ENCODE measurements at regions of chr15 and their contacts with region 1.

Region 1: GRCh38 chr15:46786590-46787285 is 930.6 kb upstream of the SEMA6D start:
- DNase-seq: no peak
- H3K4me3 ChIP-seq: no peak overlapping the region
- H3K27ac ChIP-seq: no peak overlapping the region
- H3K4me1 ChIP-seq: no peaks in the 10 kb centered on the region
- H3K27me3 ChIP-seq: no peaks in the 10 kb centered on the region
- CTCF ChIP-seq: no peak
- EP300 ChIP-seq: no peak
- POLR2A ChIP-seq: no peak

Region 2: DNA sequence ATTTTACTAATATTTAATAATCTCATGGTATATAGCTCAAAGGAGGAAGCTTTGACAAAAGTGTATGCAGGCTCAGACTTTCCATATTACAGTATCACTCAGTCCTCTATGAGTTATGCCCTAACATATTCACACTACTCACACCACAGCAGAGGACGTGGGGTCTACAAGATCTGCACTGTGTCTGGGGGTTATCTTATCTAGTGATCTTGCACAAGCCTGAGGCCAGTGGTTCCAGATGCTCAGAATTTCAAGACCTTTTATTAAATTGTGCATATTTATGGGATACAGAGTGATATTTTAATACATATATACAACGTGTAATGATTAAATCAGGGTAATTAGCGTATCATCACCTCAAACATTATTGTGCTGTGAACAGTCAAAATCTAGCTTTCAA is 218.8 kb before region 1 on chr15:
- in situ Hi-C with region 1: no loop called
- intact Hi-C with region 1: loop called (anchors 5 kb)
- DNase-seq: no peak
- H3K4me3 ChIP-seq: no peak overlapping the region
- H3K27ac ChIP-seq: no peak overlapping the region
- H3K4me1 ChIP-seq: no peaks in the 10 kb centered on the region
- H3K27me3 ChIP-seq: no peaks in the 10 kb centered on the region
- CTCF ChIP-seq: no peak
- EP300 ChIP-seq: no peak
- POLR2A ChIP-seq: no peak

Region 3: GRCh38 chr15:47293466-47294162 is 506.9 kb after region 1 on chr15:
- in situ Hi-C with region 1: no loop called
- intact Hi-C with region 1: no loop called
- DNase-seq: peak; percentile 29
- H3K4me3 ChIP-seq: no peak overlapping the region
- H3K27ac ChIP-seq: peak overlapping the region; percentile 28 to 46 (median 36)
- H3K4me1 ChIP-seq: peaks cover 0 to 7% (median 2%) of the 10 kb centered on the region in 4 donors
- H3K27me3 ChIP-seq: no peaks in the 10 kb centered on the region
- CTCF ChIP-seq: no peak
- EP300 ChIP-seq: no peak
- POLR2A ChIP-seq: no peak